CD4-positive, alpha-beta T cell (primary cell): ENCODE measurements at regions of chrX and their contacts with region 1.

Region 1: DNA sequence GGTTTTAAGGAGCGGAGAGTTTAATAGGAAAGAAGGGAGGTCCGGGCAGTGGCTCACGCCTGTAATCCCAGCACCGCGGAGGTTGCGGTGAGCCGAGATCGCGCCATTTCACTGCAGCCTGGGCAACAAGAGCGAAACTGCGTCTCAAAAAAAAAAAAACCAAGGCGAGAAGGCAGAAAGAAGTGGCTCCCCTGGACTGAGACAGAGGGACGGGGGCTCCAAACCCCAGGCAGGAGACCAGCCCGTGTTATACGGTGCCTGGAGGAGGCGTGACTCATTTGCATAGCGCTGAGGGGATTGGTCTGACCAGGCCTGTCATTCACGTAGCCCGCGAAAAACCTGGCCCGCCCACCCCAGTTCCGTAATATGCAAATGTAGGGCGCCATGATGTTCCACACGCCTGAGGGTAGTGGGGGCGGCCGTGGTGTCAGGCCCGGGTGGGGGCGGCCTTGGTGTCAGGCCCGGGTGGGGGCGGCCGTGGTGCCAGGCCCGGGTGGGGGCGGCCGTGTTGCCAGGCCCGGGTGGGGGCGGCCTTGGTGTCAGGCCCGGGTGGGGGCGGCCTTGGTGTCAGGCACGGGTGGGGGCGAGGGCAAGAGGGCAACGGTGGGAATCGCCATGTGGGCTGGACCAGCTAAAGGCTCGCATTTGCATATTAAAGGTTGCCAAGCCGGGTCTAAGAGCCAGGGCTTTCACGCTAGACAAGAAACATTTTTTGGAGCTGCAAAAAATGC is 2.1 kb downstream of the PLCXD1 start:
- DNase-seq: peak; percentile 77 to 94 (median 85)
- ATAC-seq: peak; percentile 98
- H3K4me3 ChIP-seq: peak overlapping the region; percentile 55
- H3K4me3 Mint-ChIP-seq: peak overlapping the region; percentile 95
- H3K27ac ChIP-seq: no peak overlapping the region
- H3K27ac Mint-ChIP-seq: peak overlapping the region; percentile 91
- H3K4me1 ChIP-seq: peaks cover 23% of the 10 kb centered on the region
- H3K4me1 Mint-ChIP-seq: peaks cover 28% of the 10 kb centered on the region
- H3K27me3 ChIP-seq: no peaks in the 10 kb centered on the region
- H3K27me3 Mint-ChIP-seq: no peaks in the 10 kb centered on the region
- CTCF ChIP-seq: no peak

Region 2: GRCh38 chrX:318739-319578 is 35.7 kb after region 1 on chrX and contains the start of gene GTPBP6:
- CTCF ChIA-PET with region 1: no interaction called
- POLR2A ChIA-PET with region 1: no interaction called
- intact Hi-C with region 1: loop called (anchors 2 kb)
- DNase-seq: peak; percentile 96 to 100 (median 98)
- ATAC-seq: peak; percentile 63
- H3K4me3 ChIP-seq: peak within 1 kb of the TSS; percentile 97
- H3K4me3 Mint-ChIP-seq: peak within 1 kb of the TSS; percentile 91
- H3K27ac ChIP-seq: peak within 1 kb of the TSS; percentile 89 to 94
- H3K27ac Mint-ChIP-seq: peak within 1 kb of the TSS; percentile 94
- H3K4me1 ChIP-seq: peaks cover 50% of the 10 kb centered on the region
- H3K4me1 Mint-ChIP-seq: peaks cover 34% of the 10 kb centered on the region
- H3K27me3 ChIP-seq: no peaks in the 10 kb centered on the region
- H3K27me3 Mint-ChIP-seq: peaks cover 4% of the 10 kb centered on the region
- CTCF ChIP-seq: no peak
- total RNA-seq, gene GTPBP6: 53.5 to 53.9 TPM

Region 3: GRCh38 chrX:386768-387575 is 103.7 kb after region 1 on chrX and contains the start of gene PPP2R3B:
- CTCF ChIA-PET with region 1: no interaction called
- POLR2A ChIA-PET with region 1: no interaction called
- intact Hi-C with region 1: loop called in 1 of 2 experiments (anchors 5 kb)
- DNase-seq: peak; percentile 95 to 100 (median 99)
- ATAC-seq: peak; percentile 93
- H3K4me3 ChIP-seq: peak within 1 kb of the TSS; percentile 82
- H3K4me3 Mint-ChIP-seq: peak within 1 kb of the TSS; percentile 87
- H3K27ac ChIP-seq: peak within 1 kb of the TSS; percentile 100
- H3K27ac Mint-ChIP-seq: peak within 1 kb of the TSS; percentile 94
- H3K4me1 ChIP-seq: peaks cover 16% of the 10 kb centered on the region
- H3K4me1 Mint-ChIP-seq: peaks cover 9% of the 10 kb centered on the region
- H3K27me3 ChIP-seq: no peaks in the 10 kb centered on the region
- H3K27me3 Mint-ChIP-seq: no peaks in the 10 kb centered on the region
- CTCF ChIP-seq: no peak
- total RNA-seq, gene PPP2R3B: 12.1 to 14.0 TPM

Region 4: DNA sequence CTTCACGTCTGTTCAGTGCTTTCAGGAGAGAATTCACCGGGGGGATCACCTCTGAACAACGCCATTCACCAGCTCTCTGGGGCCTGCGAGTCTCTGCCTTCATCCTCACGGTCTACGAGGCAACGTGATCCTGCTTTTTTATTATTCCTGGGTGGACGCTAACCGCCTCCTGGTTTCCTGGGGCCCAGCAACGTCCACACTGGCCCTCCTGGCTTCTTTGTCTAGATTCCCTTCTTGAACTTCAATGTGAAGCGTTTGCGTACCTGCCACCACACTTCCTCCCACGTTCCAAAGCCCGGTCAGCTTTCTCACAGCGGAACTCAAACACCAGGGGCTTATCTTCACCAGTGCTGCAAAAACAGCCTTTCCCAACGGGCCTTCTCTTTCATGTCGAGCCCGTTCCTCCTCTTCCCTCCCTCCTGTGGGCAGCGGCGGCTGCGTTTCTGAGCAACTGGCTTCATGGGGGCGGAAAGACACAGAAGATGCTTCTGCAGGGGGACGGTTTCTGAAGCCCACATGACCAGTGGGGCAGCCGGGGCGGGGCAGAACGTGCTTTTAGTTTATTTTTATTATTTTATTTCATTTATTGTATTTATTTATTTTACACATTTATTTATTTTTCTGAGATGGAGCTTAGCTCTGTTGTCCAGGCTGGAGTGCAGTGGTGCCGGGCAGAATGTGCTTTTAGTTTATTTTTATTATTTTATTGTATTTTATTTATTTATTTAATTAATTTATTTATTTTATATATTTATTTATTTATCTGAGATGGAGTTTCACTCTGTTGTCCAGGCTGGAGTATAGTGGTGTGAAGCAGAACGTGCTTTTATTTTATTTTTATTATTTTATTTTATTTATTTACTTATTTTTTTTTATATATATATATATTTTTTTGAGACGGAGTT is 864.6 kb after region 1 on chrX:
- CTCF ChIA-PET with region 1: no interaction called
- POLR2A ChIA-PET with region 1: no interaction called
- intact Hi-C with region 1: no loop called
- DNase-seq: no peak
- ATAC-seq: no peak
- H3K4me3 ChIP-seq: no peak overlapping the region
- H3K4me3 Mint-ChIP-seq: no peak overlapping the region
- H3K27ac ChIP-seq: no peak overlapping the region
- H3K27ac Mint-ChIP-seq: no peak overlapping the region
- H3K4me1 ChIP-seq: no peaks in the 10 kb centered on the region
- H3K4me1 Mint-ChIP-seq: no peaks in the 10 kb centered on the region
- H3K27me3 ChIP-seq: no peaks in the 10 kb centered on the region
- H3K27me3 Mint-ChIP-seq: peaks cover 5% of the 10 kb centered on the region
- CTCF ChIP-seq: no peak

Region 5: GRCh38 chrX:1554469-1555210 is 1271.4 kb after region 1 on chrX:
- CTCF ChIA-PET with region 1: no interaction called
- POLR2A ChIA-PET with region 1: no interaction called
- intact Hi-C with region 1: loop called in 1 of 2 experiments (anchors 5 kb)
- DNase-seq: peak; percentile 52 to 93 (median 70)
- ATAC-seq: peak; percentile 97
- H3K4me3 ChIP-seq: peak overlapping the region; percentile 4
- H3K4me3 Mint-ChIP-seq: peak overlapping the region; percentile 78
- H3K27ac ChIP-seq: peak overlapping the region; percentile 55 to 77
- H3K27ac Mint-ChIP-seq: peak overlapping the region; percentile 98
- H3K4me1 ChIP-seq: peaks cover 76% of the 10 kb centered on the region
- H3K4me1 Mint-ChIP-seq: peaks cover 70% of the 10 kb centered on the region
- H3K27me3 ChIP-seq: no peaks in the 10 kb centered on the region
- H3K27me3 Mint-ChIP-seq: no peaks in the 10 kb centered on the region
- CTCF ChIP-seq: no peak